ENCODE measurements at regions of chr17 and their contacts with region 1.

Region 1: DNA sequence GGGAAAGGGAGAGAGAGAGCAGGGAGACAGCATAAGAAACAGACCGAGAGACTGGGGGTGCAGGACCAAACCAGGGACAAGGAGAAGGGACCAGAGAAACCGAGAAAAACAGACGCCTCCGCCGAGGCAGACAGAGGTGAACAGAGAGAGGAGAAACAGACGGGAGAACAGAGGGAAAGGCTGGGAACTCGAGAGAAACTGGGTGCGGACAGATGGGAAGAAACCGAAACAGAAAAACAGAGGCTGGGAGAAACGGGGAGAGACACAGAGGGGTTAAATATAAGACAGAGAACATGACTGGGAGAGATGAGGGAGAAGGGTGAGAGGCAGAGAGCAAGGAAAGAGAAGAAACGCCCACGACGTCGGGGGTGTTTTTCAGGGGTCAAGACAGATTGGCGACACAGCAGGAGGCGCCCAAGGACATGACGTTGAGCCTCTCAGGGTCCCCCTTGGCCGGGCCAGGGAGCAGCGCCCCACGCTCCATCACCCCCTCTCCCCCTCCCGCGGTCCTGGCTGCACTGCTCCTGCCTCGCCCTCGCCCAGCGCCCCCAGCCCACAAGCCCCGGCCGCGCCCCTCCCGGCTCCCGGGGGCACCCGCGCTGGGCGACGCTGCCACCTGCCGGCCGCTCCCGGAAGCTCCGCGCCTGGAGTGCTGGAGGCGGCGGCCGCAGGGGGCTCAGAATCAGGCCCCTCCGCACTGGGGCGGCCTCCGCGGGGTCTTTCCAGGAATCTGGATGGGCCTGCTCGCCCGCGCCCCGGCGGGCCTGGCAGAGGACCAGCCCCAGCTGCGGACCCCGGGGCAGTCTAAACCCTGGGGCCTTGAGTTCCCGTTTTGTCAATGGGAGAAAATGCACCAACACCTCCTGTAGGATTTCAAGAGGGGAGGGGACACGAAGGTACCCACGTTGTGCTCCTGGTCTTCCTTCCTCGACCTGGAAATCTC is 1.3 kb upstream of the TMEM92 start:
- DNase-seq: peak; percentile 90
- H3K4me3 ChIP-seq: peak overlapping the region; percentile 44 to 67 (median 52)
- H3K27ac ChIP-seq: peak overlapping the region in 7 of 8 donors; percentile 51 to 87 (median 67)
- H3K4me1 ChIP-seq: peaks cover 0 to 57% (median 21%) of the 10 kb centered on the region in 6 donors
- H3K27me3 ChIP-seq: peaks cover 0 to 58% (median 21%) of the 10 kb centered on the region in 7 donors
- CTCF ChIP-seq: peak; percentile 26 to 94 (median 84)
- POLR2A ChIP-seq: no peak

Region 2: GRCh38 chr17:50200457-50201275 is 72.3 kb before region 1 on chr17:
- intact Hi-C with region 1: loop called (anchors 1 kb)
- DNase-seq: peak; percentile 96
- H3K4me3 ChIP-seq: peak overlapping the region; percentile 23 to 73 (median 44)
- H3K27ac ChIP-seq: peak overlapping the region in 7 of 8 donors; percentile 70 to 84 (median 77)
- H3K4me1 ChIP-seq: peaks cover 0 to 61% (median 30%) of the 10 kb centered on the region in 6 donors
- H3K27me3 ChIP-seq: peaks cover 0 to 77% (median 32%) of the 10 kb centered on the region in 7 donors
- CTCF ChIP-seq: peak; percentile 98 to 100 (median 100)
- POLR2A ChIP-seq: no peak

Measured in spleen (tissue), 13 donors.